Left cardiac atrium (tissue), 4 donors: ENCODE measurements at regions of chr18 and their contacts with region 1.

Region 1: DNA sequence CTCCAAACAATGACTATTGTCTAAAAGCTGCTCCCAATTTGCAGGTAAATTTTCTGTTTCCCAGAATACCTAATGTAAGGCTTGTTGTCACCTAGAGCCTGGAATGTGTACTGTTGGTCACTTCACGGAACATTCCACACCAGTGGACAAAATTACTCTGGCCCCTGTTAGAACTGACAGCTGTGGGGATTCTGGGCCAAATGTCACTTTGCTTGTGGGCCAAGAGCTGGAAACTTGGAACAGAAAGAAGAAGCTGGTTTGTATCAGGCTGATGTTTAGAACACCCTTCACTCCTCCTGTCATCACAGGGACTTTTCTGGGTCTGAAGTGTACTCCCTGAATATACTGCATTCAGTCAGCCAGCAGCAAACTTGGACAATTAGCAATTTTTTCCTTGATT is 495.6 kb upstream of the SYT4 start:
- DNase-seq: peak; percentile 40
- ATAC-seq: peak; percentile 96 to 97

Region 2: GRCh38 chr18:42925036-42925435 is 847.9 kb before region 1 on chr18:
- intact Hi-C with region 1: no loop called
- DNase-seq: no peak
- ATAC-seq: no peak

Region 3: GRCh38 chr18:43661570-43661969 is 111.3 kb before region 1 on chr18:
- intact Hi-C with region 1: loop called in 1 of 2 experiments (anchors 10 kb)
- DNase-seq: no peak
- ATAC-seq: peak in 1 of 2 donors; percentile 62

Region 4: DNA sequence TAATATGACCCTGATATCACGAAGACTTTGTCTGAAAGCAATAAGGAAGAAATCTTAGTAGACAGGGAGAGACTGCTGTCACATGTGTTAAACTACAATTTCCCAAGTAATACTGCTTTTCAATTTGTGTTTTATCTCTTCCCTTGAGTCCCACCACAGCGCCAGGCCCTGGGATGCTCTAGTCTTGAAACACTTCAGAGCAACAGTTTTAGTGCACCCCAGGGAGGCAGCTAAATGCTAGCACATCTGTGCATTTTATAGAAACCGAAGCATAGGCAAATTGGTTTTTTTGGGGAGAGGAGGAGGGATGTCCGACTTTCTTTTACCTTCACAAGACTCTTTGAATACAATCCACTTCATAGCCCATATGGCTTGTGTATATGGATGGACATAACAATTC is 54.4 kb after region 1 on chr18:
- intact Hi-C with region 1: loop called in 1 of 2 experiments (anchors 10 kb)
- DNase-seq: no peak
- ATAC-seq: no peak

Region 5: GRCh38 chr18:44119607-44120006 is 346.7 kb after region 1 on chr18:
- intact Hi-C with region 1: no loop called
- DNase-seq: no peak
- ATAC-seq: no peak

Region 6: DNA sequence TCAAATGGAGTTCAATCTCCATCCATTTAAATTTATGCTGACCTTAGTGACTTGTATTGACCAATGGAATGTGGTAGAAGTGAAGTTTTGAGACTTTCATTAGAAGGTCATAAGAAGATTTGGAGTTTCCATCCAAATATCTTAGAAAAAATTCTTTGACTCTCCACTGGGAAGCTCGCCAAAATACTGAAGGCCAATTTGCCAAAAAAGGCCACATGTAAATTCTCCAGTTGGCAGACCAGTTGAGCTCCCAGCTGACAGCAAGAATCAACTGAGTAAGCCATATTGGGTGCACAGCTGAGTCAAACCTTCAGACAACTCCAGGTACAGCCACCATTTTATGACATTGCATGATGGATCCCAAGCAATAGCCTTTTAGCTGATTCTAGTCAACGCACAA is 679.4 kb after region 1 on chr18:
- intact Hi-C with region 1: loop called in 1 of 2 experiments (anchors 5 kb)
- DNase-seq: no peak
- ATAC-seq: no peak